Dendritic cell treated with granulocyte-macrophage colony-stimulating factor and Interleukin-4, amounts not matched to agents 40 ng/mL and 50 ng/mL, for 4 days (primary cell): ENCODE measurements at regions of chr3 and their contacts with region 1.

Region 1: DNA sequence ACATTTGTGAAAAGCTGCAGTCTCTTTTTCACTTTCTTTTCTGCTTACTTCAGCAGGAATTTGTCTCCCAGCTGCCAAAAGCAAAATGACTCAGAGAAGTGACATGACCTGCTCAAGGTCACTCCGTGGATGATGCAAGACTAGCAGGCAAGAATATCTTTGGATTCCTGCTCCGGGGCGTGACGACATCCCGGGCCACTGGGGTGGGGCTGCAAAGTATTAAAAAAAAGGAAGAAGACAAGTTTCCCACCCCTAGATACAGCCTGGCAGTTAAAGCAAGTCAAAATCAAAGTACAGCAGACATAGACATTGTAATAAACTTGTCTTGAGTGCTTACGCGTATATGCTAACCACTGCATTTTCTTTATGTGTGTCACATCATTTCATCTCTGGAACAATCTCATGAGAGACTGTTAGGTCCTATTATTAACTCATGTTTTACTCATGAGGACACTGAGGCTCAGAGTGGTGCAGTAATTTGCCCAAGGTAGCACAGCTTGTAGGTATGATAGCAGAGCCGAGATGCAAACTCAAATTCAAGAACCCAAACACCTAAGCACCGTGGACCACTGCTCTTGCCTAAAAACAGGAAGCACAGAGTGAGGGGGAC is 485.2 kb upstream of the PROK2 start:
- H3K4me3 Mint-ChIP-seq: no peak overlapping the region
- H3K27ac Mint-ChIP-seq: peak overlapping the region; percentile 77
- H3K4me1 Mint-ChIP-seq: peaks cover 79% of the 10 kb centered on the region
- H3K27me3 Mint-ChIP-seq: peaks cover 19% of the 10 kb centered on the region

Region 2: GRCh38 chr3:71875461-71875947 is 394.7 kb before region 1 on chr3:
- intact Hi-C with region 1: loop called (anchors 2 kb)
- H3K4me3 Mint-ChIP-seq: no peak overlapping the region
- H3K27ac Mint-ChIP-seq: no peak overlapping the region
- H3K4me1 Mint-ChIP-seq: peaks cover 7% of the 10 kb centered on the region
- H3K27me3 Mint-ChIP-seq: peaks cover 85% of the 10 kb centered on the region

Region 3: GRCh38 chr3:71905426-71905825 is 364.8 kb before region 1 on chr3:
- intact Hi-C with region 1: loop called (anchors 10 kb)
- H3K4me3 Mint-ChIP-seq: no peak overlapping the region
- H3K27ac Mint-ChIP-seq: no peak overlapping the region
- H3K4me1 Mint-ChIP-seq: peaks cover 66% of the 10 kb centered on the region
- H3K27me3 Mint-ChIP-seq: peaks cover 97% of the 10 kb centered on the region

Region 4: DNA sequence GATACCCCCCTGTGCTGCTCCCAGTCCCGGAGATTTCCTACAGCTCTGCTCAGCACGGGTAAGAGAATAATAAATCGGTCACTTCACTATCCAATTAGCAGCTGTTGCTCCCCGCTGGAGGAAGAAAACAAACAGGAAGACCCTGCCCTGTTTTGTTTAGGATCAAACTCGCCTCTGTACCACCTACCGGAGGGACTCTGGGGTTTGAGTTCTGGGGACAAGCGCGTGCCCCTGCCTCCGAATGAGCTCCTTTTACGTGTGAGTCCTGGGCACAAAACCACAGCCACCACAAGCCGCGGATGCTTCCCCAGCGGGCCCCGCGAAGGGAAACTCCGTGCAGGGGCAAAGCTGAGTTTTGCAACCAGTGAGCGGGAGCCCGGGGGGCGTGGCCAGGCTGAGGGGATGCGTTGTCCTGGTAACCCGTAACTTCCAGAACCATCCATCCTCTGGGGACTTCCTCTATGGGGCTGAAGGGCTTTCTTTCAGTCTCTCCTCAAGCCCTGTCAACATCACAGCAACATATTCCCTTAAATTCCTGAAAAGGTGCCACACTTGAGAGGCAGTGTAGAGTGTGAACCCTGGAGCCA is 169.5 kb before region 1 on chr3:
- intact Hi-C with region 1: loop called (anchors 5 kb)
- H3K4me3 Mint-ChIP-seq: peak overlapping the region; percentile 75
- H3K27ac Mint-ChIP-seq: peak overlapping the region; percentile 93
- H3K4me1 Mint-ChIP-seq: peaks cover 71% of the 10 kb centered on the region
- H3K27me3 Mint-ChIP-seq: peaks cover 36% of the 10 kb centered on the region

Region 5: GRCh38 chr3:72347819-72348319 is 77.7 kb after region 1 on chr3:
- intact Hi-C with region 1: loop called (anchors 5 kb)
- H3K4me3 Mint-ChIP-seq: peak overlapping the region; percentile 71
- H3K27ac Mint-ChIP-seq: peak overlapping the region; percentile 40
- H3K4me1 Mint-ChIP-seq: peaks cover 53% of the 10 kb centered on the region
- H3K27me3 Mint-ChIP-seq: peaks cover 55% of the 10 kb centered on the region

Region 6: DNA sequence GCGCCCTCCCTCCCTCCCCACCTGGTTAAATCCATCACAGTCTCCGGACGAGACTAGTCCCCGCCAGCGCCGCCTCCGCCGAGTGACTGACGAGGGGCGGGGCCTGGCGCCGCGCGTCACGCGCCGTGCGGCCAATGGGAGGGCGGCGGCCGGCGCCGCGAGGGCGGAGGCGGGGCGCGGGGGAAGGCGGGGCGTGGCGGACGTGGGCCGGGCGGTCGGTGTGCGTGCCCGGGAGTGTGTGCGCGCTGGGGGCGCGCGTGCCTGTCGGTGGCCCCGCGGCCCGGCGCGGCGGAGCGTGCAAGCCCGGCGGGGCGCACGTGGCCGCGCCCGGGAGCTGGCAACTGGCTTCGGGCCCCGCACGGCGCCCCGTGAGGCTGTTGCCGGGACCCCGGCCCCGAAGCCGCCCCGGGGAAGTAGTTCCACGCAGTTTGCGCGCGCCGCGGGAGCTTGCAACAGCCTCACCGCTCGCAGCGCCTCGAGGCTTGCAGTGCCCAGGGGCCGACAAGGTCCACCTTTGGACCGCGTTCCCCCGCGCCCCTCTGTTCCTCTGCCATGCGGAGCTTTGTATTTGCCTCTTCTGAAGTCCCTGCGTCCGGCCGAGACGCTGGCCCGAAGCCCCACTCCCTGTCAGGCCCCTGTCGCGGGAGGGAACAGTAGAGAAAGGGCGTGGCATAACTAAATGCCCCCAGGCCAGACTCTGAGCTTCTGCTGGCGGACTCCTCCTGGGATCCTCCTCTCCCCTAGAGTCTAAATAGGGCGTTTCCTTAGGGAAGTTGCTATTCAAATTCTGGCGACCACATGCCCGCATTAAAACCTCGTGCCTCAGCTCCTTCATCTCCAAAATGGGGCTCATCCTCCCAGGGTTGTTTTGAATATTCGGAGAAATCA is 177.1 kb after region 1 on chr3:
- intact Hi-C with region 1: loop called (anchors 5 kb)
- H3K4me3 Mint-ChIP-seq: peak overlapping the region; percentile 83
- H3K27ac Mint-ChIP-seq: peak overlapping the region; percentile 74
- H3K4me1 Mint-ChIP-seq: peaks cover 53% of the 10 kb centered on the region
- H3K27me3 Mint-ChIP-seq: peaks cover 12% of the 10 kb centered on the region